ENCODE measurements at regions of chr13 and their contacts with region 1.

Region 1: GRCh38 chr13:50783717-50784290 is 59.7 kb downstream of the DLEU7 start:
- DNase-seq: peak; percentile 52 to 89 (median 83)
- H3K4me3 ChIP-seq: no peak overlapping the region
- H3K27ac ChIP-seq: no peak overlapping the region
- H3K4me1 ChIP-seq: peaks cover 14 to 49% (median 24%) of the 10 kb centered on the region in 4 experiments
- H3K27me3 ChIP-seq: no peaks in the 10 kb centered on the region

Region 2: GRCh38 chr13:50801087-50801931 is 17.5 kb after region 1 on chr13:
- CTCF ChIA-PET with region 1: interaction called, 18 read pairs
- POLR2A ChIA-PET with region 1: no interaction called
- DNase-seq: peak; percentile 75 to 92 (median 87)
- H3K4me3 ChIP-seq: no peak overlapping the region
- H3K27ac ChIP-seq: no peak overlapping the region
- H3K4me1 ChIP-seq: peaks cover 12 to 28% (median 19%) of the 10 kb centered on the region in 4 experiments
- H3K27me3 ChIP-seq: no peaks in the 10 kb centered on the region

Measured in common myeloid progenitor, CD34-positive (primary cell).